ENCODE measurements at regions of chr4 and their contacts with region 1.

Region 1: GRCh38 chr4:76441881-76442280 is 6.9 kb downstream of the SHROOM3 start:
- DNase-seq: no peak
- ATAC-seq: no peak

Region 2: GRCh38 chr4:76499461-76499860 is 57.6 kb after region 1 on chr4:
- intact Hi-C with region 1: loop called (anchors 5 kb)
- DNase-seq: no peak
- ATAC-seq: no peak

Region 3: GRCh38 chr4:76634239-76634638 is 192.4 kb after region 1 on chr4:
- intact Hi-C with region 1: no loop called
- DNase-seq: no peak
- ATAC-seq: no peak

Region 4: GRCh38 chr4:76733068-76733771 is 291.3 kb after region 1 on chr4:
- intact Hi-C with region 1: no loop called
- DNase-seq: no peak
- ATAC-seq: no peak